ENCODE measurements at regions of chr1 and their contacts with region 1.

Region 1: DNA sequence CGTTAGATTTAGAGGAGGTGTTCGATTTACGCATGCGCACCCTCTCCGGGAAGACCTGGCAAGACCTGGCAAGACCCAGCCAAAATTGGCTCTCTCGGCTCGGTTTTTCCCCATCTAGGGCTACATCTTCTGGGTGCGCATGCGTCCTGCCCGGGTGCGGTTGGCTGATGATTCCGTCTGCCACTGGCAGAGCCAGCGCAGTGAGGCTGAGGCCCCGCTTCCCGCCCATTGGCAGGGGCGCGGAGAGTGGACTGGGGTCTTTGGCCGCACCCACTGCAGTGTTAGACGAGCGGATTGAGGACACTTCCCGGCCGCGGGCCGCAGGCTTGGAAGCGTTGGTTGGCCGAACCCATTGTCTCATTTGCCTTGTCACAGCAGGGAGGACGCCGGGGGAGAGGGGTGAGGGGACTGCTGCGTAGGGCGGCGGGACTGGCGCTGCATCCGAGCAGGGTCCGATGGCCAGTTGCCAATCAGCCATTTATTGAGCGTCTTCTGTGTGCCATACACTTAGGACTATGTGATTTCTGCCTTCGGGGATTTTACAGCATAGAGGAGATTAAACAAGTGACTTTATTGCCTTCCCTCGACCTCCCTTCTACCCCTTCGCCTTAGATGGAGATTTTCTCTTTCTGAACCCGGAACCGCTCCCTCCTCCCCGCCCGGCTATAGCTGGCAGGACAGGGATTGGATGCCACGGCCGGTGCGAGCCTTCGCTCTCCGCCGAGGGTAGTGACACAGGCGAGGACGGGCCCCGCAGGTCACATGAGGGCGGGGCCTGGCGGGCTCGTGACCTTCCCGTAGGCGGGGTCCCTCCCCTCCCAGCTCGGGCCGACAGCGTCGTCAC is 43.7 kb downstream of the MEF2D start:
- DNase-seq: peak; percentile 92
- ATAC-seq: peak; percentile 95
- H3K4me3 ChIP-seq: peak overlapping the region; percentile 34; the same call in 1 of the 2 replicates
- H3K27ac ChIP-seq: peak overlapping the region; percentile 87
- H3K4me1 ChIP-seq: peaks cover 8% of the 10 kb centered on the region
- H3K27me3 ChIP-seq: no peaks in the 10 kb centered on the region; a peak in 2 of 4 replicates
- CTCF ChIP-seq: no peak
- EP300 ChIP-seq: no peak; a peak in 1 of 4 replicates
- POLR2A ChIP-seq: peak; percentile 82
- RAD21 ChIP-seq: no peak

Region 2: GRCh38 chr1:155847823-155848529 is 608.9 kb before region 1 on chr1:
- CTCF ChIA-PET with region 1: no interaction called
- POLR2A ChIA-PET with region 1: no interaction called
- RAD21 ChIA-PET with region 1: no interaction called
- SMC1A ChIA-PET with region 1: no interaction called
- in situ Hi-C with region 1: no loop called
- intact Hi-C with region 1: no loop called
- DNase-seq: no peak
- ATAC-seq: peak; percentile 71
- H3K4me3 ChIP-seq: no peak overlapping the region
- H3K27ac ChIP-seq: no peak overlapping the region
- H3K4me1 ChIP-seq: no peaks in the 10 kb centered on the region; the same call in 1 of the 2 replicates
- H3K27me3 ChIP-seq: no peaks in the 10 kb centered on the region
- CTCF ChIP-seq: no peak
- EP300 ChIP-seq: no peak
- POLR2A ChIP-seq: no peak
- RAD21 ChIP-seq: no peak

Region 3: DNA sequence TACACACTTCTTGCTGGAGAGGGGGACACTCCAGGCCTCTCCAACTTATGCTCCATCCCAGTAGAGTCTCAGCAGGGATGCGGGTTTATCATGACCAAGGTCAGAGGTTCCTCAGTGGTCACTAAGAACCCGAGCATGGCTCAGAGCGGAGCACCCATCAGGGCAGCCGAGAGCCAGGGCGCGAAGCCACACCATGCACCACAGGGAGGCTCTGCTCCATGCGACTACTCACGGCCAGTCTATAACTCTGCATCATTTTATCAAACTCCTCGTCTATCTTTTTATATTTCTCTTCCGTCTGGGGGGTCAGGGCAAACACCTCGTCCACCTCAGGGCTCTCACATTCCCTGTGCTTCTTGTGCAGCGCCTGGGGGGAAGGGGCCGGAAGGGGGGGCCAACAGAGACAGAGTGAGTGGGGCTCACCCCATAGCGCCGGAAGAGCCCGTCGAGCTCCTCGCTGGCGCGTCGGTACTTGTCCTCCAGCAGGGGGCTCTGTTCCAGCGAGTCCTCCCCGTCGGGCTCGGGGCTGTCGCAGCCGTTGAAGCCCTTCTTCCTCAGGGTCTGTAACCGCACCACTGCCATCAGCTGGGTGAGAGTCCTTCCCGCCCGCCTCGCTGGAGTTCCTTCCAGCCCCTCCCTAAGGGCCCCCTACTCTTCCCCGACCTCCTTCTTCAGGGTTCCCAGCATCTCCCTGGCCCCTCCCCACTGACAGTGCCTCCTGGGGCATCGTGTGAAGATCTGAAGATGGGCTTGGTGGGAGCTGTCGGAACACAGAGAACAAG is 23.8 kb after region 1 on chr1:
- CTCF ChIA-PET with region 1: interaction called, 12 read pairs
- POLR2A ChIA-PET with region 1: interaction called, 5 read pairs
- RAD21 ChIA-PET with region 1: interaction called, 13 read pairs
- SMC1A ChIA-PET with region 1: interaction called, 10 read pairs
- in situ Hi-C with region 1: no loop called
- intact Hi-C with region 1: no loop called
- DNase-seq: no peak
- ATAC-seq: peak; percentile 89
- H3K4me3 ChIP-seq: no peak overlapping the region
- H3K27ac ChIP-seq: peak overlapping the region; percentile 75
- H3K4me1 ChIP-seq: peaks cover 37% of the 10 kb centered on the region
- H3K27me3 ChIP-seq: no peaks in the 10 kb centered on the region
- CTCF ChIP-seq: peak; percentile 66 to 85 (median 69)
- EP300 ChIP-seq: no peak
- POLR2A ChIP-seq: no peak; the same call in 1 of the 2 replicates
- RAD21 ChIP-seq: peak; percentile 59

Region 4: DNA sequence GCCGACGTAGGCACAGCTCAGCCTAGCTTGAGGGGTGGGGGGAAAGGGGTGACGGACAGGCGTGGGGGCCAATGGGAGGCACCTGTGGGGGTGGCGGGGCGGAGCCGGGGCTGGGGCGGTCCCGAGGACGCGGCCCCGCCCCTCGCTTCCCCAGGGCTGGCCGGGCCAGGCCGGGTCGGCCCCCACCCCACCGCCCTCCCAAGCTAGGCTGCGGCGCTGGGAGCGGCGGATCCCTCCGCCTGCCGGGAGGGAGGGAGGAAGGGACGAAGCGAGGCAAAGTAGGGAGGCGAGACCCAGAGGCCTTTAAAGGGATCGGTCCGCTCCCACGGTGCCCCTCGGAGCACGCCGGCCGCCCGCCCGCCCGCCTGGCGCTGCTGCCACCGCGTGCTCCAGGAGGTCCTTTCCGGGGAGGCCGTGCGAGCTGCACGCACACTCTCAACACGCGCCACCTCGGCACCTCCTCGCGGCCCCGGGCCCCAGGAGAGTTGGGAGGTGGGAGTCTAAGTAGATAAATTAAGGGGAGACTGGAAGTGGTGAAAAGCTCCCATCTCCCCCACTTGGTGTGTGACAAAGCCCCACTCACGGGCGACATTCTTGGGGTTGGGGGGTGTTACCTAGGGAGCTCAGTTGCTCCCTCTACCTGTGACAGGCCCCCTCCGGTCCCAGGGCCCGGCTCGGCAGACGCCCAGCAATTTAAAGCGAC is 44.1 kb after region 1 on chr1:
- CTCF ChIA-PET with region 1: interaction called, 26 read pairs
- POLR2A ChIA-PET with region 1: interaction called, 21 read pairs
- RAD21 ChIA-PET with region 1: interaction called, 25 read pairs
- SMC1A ChIA-PET with region 1: interaction called, 18 read pairs
- in situ Hi-C with region 1: no loop called
- intact Hi-C with region 1: loop called (anchors 1 kb)
- DNase-seq: no peak
- ATAC-seq: peak; percentile 74
- H3K4me3 ChIP-seq: peak overlapping the region; percentile 92
- H3K27ac ChIP-seq: peak overlapping the region; percentile 97
- H3K4me1 ChIP-seq: peaks cover 52% of the 10 kb centered on the region
- H3K27me3 ChIP-seq: no peaks in the 10 kb centered on the region
- CTCF ChIP-seq: peak; percentile 57 to 71 (median 65)
- EP300 ChIP-seq: peak; percentile 4 to 68; a peak in 3 of 4 replicates
- POLR2A ChIP-seq: peak; percentile 88
- RAD21 ChIP-seq: peak; percentile 43

Region 5: DNA sequence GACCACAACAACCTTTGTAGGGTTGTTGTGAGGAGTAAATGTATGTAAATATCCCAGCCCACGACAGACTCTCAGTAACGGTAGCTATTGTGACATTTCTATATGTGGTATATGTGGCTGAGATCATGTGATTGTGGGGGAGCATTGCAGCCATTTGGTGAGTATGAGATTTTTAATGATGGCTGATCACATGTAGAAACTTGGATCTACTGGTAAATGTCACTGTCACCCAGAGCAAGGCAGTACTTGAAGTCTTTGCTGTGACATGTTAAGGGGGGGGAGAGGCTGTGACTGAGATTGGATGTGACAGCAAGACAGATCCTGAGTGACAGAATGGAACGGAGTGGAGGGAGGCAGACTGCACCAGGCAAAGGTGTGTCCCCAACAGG is 67.6 kb after region 1 on chr1:
- CTCF ChIA-PET with region 1: interaction called, 13 read pairs
- POLR2A ChIA-PET with region 1: interaction called, 7 read pairs
- RAD21 ChIA-PET with region 1: interaction called, 7 read pairs
- SMC1A ChIA-PET with region 1: interaction called, 5 read pairs
- in situ Hi-C with region 1: no loop called
- intact Hi-C with region 1: no loop called
- DNase-seq: no peak
- ATAC-seq: peak; percentile 69
- H3K4me3 ChIP-seq: peak overlapping the region; percentile 54; the same call in 1 of the 2 replicates
- H3K27ac ChIP-seq: peak overlapping the region; percentile 76
- H3K4me1 ChIP-seq: peaks cover 24% of the 10 kb centered on the region
- H3K27me3 ChIP-seq: no peaks in the 10 kb centered on the region
- CTCF ChIP-seq: no peak
- EP300 ChIP-seq: no peak
- POLR2A ChIP-seq: no peak
- RAD21 ChIP-seq: no peak

Region 6: GRCh38 chr1:156583821-156584622 is 127.2 kb after region 1 on chr1:
- CTCF ChIA-PET with region 1: interaction called, 3 read pairs
- POLR2A ChIA-PET with region 1: no interaction called
- RAD21 ChIA-PET with region 1: interaction called, 5 read pairs
- SMC1A ChIA-PET with region 1: interaction called, 8 read pairs
- in situ Hi-C with region 1: no loop called
- intact Hi-C with region 1: loop called (anchors 2 kb)
- DNase-seq: no peak
- ATAC-seq: peak; percentile 83
- H3K4me3 ChIP-seq: no peak overlapping the region
- H3K27ac ChIP-seq: no peak overlapping the region
- H3K4me1 ChIP-seq: peaks cover 16% of the 10 kb centered on the region
- H3K27me3 ChIP-seq: no peaks in the 10 kb centered on the region; a peak in 1 of 4 replicates
- CTCF ChIP-seq: peak; percentile 88 to 93 (median 89)
- EP300 ChIP-seq: no peak
- POLR2A ChIP-seq: no peak
- RAD21 ChIP-seq: peak; percentile 87

Region 7: GRCh38 chr1:156601122-156601830 is 144.4 kb after region 1 on chr1 and contains the start of gene GPATCH4:
- CTCF ChIA-PET with region 1: interaction called, 5 read pairs
- POLR2A ChIA-PET with region 1: interaction called, 12 read pairs
- RAD21 ChIA-PET with region 1: interaction called, 18 read pairs
- SMC1A ChIA-PET with region 1: interaction called, 4 read pairs
- in situ Hi-C with region 1: loop called (anchors 10 kb)
- intact Hi-C with region 1: no loop called
- DNase-seq: no peak
- ATAC-seq: peak; percentile 80
- H3K4me3 ChIP-seq: peak within 1 kb of the TSS; percentile 82
- H3K27ac ChIP-seq: peak within 1 kb of the TSS; percentile 93
- H3K4me1 ChIP-seq: peaks cover 9% of the 10 kb centered on the region
- H3K27me3 ChIP-seq: no peaks in the 10 kb centered on the region
- CTCF ChIP-seq: no peak
- EP300 ChIP-seq: 0 out of 4 replicates have a peak, but pooled peaks of 1 of the 2 experiments have one; percentile 13
- POLR2A ChIP-seq: peak; percentile 92
- RAD21 ChIP-seq: no peak
- polyA plus RNA-seq, gene GPATCH4: 82.5 to 90.4 TPM

Region 8: DNA sequence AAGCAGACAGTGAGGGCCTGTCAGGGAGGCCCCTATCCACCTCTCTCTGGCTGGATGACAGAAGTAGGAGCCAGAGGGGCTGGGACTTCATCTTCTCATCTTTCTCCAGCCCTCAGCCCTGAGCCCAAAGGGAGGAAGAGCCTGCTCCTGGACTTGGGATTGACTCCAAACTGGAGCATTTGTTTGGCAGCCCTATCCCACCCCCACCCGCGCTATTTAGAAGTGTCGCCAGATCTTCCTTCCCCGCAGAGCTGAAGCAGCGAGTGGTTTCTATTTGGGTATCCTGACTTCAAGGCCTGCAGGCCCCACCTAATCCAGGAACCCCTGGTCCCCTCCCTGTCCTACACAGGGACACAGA is 210.7 kb after region 1 on chr1:
- CTCF ChIA-PET with region 1: no interaction called
- POLR2A ChIA-PET with region 1: no interaction called
- RAD21 ChIA-PET with region 1: no interaction called
- SMC1A ChIA-PET with region 1: no interaction called
- in situ Hi-C with region 1: no loop called
- intact Hi-C with region 1: no loop called
- DNase-seq: no peak
- ATAC-seq: no peak
- H3K4me3 ChIP-seq: no peak overlapping the region
- H3K27ac ChIP-seq: no peak overlapping the region
- H3K4me1 ChIP-seq: peaks cover 31% of the 10 kb centered on the region
- H3K27me3 ChIP-seq: no peaks in the 10 kb centered on the region
- CTCF ChIP-seq: no peak
- EP300 ChIP-seq: no peak
- POLR2A ChIP-seq: no peak
- RAD21 ChIP-seq: no peak

Measured in GM12878 (cell line).